ENCODE measurements at regions of chr9 and their contacts with region 1.

Region 1: GRCh38 chr9:34437006-34437925 is 21.1 kb downstream of the FAM219A start:
- H3K4me3 Mint-ChIP-seq: no peak overlapping the region
- H3K27ac Mint-ChIP-seq: no peak overlapping the region
- H3K4me1 Mint-ChIP-seq: peaks cover 14% of the 10 kb centered on the region
- H3K27me3 Mint-ChIP-seq: no peaks in the 10 kb centered on the region

Region 2: GRCh38 chr9:34500623-34501267 is 63.5 kb after region 1 on chr9:
- intact Hi-C with region 1: loop called (anchors 1 kb)
- H3K4me3 Mint-ChIP-seq: no peak overlapping the region
- H3K27ac Mint-ChIP-seq: no peak overlapping the region
- H3K4me1 Mint-ChIP-seq: peaks cover 13% of the 10 kb centered on the region
- H3K27me3 Mint-ChIP-seq: peaks cover 33% of the 10 kb centered on the region

Region 3: GRCh38 chr9:34591248-34591916 is 154.1 kb after region 1 on chr9:
- intact Hi-C with region 1: loop called (anchors 5 kb)
- H3K4me3 Mint-ChIP-seq: peak overlapping the region; percentile 75
- H3K27ac Mint-ChIP-seq: no peak overlapping the region
- H3K4me1 Mint-ChIP-seq: peaks cover 48% of the 10 kb centered on the region
- H3K27me3 Mint-ChIP-seq: peaks cover 78% of the 10 kb centered on the region

Measured in dendritic cell treated with granulocyte-macrophage colony-stimulating factor and Interleukin-4, amounts not matched to agents 40 ng/mL and 50 ng/mL, for 4 days (primary cell).